HEK293 (cell line): ENCODE measurements at regions of chr6 and their contacts with region 1.

Region 1: DNA sequence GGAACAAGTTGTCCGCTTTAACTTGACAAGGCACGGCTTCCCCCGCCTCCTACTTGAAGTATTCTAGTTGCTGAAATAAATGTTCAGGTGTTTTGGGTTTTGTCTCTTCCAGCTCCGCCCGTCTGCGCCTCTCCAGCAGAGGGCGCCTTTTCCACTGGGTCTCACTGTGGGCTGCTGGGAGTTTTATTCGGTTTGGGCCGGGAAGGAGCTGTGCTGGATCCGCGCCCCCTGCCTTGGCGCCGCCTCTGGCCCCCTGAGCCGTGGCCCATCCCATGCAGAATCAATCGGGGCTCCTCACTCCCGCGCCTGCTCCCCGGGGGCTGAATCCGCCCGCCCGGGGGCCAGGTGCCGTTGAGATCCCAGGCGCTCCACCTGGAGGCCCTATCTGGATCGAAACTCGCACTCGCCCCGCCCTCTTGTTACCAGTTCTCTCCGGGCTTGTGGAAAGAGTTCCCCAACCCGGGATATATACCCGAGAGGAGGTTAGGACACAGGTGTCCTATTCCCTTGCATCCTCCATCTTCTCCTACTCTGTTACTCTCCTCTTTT is 51.0 kb upstream of the TCF21 start:
- H3K4me3 ChIP-seq: peak overlapping the region; percentile 57
- H3K27ac ChIP-seq: peak overlapping the region; percentile 36; the same call in 1 of the 2 replicates
- H3K4me1 ChIP-seq: no peaks in the 10 kb centered on the region
- CTCF ChIP-seq: peak; percentile 96

Region 2: GRCh38 chr6:133396233-133396983 is 441.5 kb before region 1 on chr6:
- CTCF ChIA-PET with region 1: no interaction called
- POLR2A ChIA-PET with region 1: no interaction called
- H3K4me3 ChIP-seq: no peak overlapping the region
- H3K27ac ChIP-seq: no peak overlapping the region
- H3K4me1 ChIP-seq: peaks cover 17% of the 10 kb centered on the region
- CTCF ChIP-seq: no peak

Region 3: DNA sequence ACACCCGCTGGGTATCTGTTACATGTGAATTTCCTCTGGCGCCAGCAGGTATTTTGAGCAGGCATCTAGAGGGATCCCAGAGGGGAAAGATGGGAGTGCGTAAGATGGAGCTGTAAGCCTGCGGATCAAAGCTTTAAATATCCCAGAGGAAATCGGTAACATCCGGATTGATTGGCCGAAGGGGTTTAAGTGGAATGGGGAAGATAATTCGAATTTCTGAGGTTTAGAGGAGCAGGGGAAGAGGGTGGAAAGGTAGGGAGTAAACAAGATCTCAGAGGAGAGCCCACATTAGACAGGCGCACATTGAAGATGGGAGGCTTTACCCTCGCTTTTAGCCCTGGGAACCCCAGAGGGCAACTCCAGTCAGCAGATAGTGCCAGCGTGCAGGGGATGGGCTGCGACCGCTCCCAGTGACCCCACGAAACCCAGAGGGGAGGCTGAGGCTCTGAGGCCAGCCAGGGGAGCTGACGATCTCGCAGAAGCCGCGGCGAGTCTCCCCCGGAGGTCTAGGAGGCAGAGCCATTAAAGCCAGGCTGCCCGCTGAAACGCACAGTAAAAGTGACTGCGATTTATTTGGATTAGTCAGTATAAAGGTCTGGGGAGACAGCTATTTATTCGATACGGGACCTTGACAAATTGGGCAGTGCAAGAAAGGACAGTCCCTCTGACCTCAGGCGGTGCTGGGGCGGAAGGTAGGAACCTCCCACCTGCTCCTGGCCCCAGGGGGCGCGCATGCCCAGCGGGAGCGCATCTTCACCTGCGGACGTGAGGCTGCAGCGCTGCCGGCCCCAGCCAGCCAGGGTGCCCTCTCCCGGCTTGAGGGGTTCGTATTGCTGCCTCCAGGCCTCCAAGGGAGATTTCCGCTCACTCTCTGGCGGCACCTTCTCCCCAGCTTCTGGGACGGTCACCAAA is 16.7 kb after region 1 on chr6:
- CTCF ChIA-PET with region 1: interaction called, 21 read pairs
- POLR2A ChIA-PET with region 1: interaction called, 3 read pairs
- H3K4me3 ChIP-seq: peak overlapping the region; percentile 47
- H3K27ac ChIP-seq: no peak overlapping the region
- H3K4me1 ChIP-seq: no peaks in the 10 kb centered on the region
- CTCF ChIP-seq: peak; percentile 96

Region 4: GRCh38 chr6:133887156-133887879 is 49.4 kb after region 1 on chr6:
- CTCF ChIA-PET with region 1: interaction called, 13 read pairs
- POLR2A ChIA-PET with region 1: no interaction called
- H3K4me3 ChIP-seq: no peak overlapping the region
- H3K27ac ChIP-seq: peak overlapping the region; percentile 63
- H3K4me1 ChIP-seq: peaks cover 27% of the 10 kb centered on the region
- CTCF ChIP-seq: no peak

Region 5: GRCh38 chr6:134145786-134146185 is 307.9 kb after region 1 on chr6:
- CTCF ChIA-PET with region 1: no interaction called
- POLR2A ChIA-PET with region 1: no interaction called
- H3K4me3 ChIP-seq: no peak overlapping the region
- H3K27ac ChIP-seq: no peak overlapping the region
- H3K4me1 ChIP-seq: no peaks in the 10 kb centered on the region
- CTCF ChIP-seq: no peak